Head of caudate nucleus (tissue), 42 donors: ENCODE measurements at regions of chr7 and their contacts with region 1.

Region 1: GRCh38 chr7:88169717-88170320 is 50.0 kb downstream of the SRI start:
- DNase-seq: no peak

Region 2: DNA sequence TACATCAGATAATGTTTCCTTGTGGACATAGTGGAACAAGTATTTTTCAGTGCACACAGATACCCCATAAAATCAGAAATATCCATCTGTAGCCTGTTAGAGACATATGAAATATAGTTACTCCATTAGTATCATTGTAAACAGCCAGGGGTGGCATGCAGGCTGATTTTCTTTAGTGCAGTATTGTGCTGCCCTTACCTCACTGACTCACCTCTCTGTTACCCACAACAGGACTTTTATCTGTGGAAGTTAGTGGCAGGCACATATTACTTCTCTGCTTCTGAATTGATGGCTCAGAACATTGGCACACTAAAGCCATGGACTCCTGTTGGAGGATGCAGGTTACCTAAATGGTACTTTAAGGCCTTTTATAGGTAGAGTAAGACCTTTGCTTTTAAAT is 363.7 kb before region 1 on chr7:
- intact Hi-C with region 1: loop called (anchors 5 kb)
- DNase-seq: no peak

Region 3: DNA sequence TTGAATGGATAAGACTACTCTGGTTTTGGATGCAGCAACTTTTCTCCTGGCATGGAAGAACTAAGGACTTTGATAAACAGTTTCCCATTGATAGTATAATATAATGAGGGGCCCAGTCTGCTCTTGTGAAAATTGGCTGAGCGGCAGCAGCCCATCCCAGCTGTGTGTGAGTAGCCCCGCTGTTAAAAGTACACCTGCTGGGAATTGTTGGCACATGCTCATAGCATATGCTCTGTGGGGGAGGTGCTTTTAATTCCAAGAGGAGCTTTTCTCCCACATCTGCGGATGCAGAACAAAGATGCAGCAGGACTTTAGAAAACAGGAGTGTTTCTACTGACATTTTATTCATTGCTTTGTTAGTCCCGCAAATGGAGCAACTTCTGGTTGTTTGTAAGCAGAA is 31.0 kb after region 1 on chr7:
- intact Hi-C with region 1: no loop called
- DNase-seq: peak in 12 of 42 donors; percentile 11 to 44 (median 28)